Posterior cingulate gyrus (tissue), 11 donors: ENCODE measurements at regions of chr4 and their contacts with region 1.

Region 1: DNA sequence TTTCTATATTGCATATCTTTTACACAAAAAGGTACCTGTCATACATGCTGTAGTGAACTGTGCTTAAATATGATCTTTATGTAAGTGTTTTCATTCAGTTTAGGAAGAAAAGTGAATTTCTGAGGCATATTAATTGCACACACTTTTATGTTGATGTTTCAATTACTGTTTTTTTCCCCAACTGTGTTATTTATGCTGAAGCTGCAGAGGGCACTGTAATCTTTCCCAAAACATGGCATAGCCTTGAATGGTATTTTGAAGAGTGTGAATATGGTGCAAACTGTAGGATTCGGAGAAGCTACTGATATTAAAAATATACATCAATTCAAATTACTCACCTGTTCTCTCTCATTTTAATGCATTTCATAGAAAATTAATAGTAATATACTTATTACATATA is 6.0 kb upstream of the CENPE start:
- DNase-seq: no peak

Region 2: GRCh38 chr4:102687373-102687981 is 516.6 kb before region 1 on chr4:
- intact Hi-C with region 1: no loop called
- DNase-seq: no peak

Region 3: GRCh38 chr4:103786014-103786413 is 581.9 kb after region 1 on chr4:
- intact Hi-C with region 1: loop called (anchors 5 kb)
- DNase-seq: no peak

Region 4: DNA sequence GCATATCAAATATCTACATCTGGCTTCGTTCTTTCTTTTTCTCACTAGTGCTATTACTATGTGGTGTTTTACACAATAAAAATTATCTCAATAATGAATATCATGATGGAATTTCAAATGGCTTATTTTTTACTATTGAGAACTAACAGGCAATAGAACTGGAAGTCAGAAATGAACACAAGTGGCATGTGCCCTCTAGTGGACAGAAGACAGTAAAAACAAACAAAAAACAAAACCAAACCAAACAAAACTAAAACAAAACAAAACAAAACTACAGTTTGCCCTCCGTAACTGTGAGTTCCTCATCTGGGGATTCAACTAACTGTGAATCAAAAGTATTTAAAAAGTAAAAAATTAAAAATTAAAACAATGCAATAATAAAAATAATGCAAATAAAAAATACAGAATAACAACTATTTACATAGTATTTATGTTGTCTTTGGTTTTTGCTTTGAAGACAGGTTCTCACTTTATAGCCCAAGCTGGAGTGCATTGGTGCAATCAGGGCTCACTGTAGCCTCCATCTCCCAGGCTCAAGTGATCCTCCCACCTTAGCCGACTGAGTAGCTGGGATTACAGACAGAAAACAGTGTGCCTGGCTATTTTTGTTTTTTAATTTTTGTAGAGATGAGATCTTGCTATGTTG is 711.2 kb after region 1 on chr4:
- intact Hi-C with region 1: loop called (anchors 5 kb)
- DNase-seq: no peak

Region 5: DNA sequence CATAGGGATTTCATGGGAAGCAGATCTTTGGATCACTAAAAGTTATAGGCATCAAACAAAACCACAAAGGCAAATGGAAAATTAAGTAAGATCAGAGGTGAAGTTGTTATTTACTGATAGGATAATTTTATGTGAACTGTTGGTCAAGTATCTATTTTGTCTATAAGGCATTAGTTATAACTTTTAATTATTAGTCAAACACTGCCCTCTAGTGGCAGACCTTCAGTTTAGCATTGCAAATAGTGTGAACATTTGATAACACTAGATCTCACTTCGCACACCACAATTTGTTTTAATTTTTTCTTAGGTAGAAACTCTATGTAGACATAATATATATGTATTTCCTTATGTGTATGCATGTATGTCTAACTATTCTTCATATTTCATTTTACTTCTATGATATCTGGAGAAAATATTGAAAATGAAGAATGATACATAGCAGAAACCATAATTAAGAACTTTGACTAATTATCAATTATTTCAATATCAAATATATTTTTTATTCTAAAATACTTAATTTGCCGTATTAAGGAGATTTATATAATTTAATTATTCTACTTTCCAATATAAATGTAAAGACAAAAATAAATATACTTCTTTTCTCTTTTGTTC is 730.2 kb after region 1 on chr4:
- intact Hi-C with region 1: loop called (anchors 5 kb)
- DNase-seq: peak in 1 of 10 donors; percentile 30